GM12878 (cell line): ENCODE measurements at regions of chr17 and their contacts with region 1.

Region 1: GRCh38 chr17:27892866-27893769 is at the start of gene LYRM9:
- DNase-seq: peak; percentile 48
- ATAC-seq: peak; percentile 99
- H3K4me3 ChIP-seq: peak within 1 kb of the TSS; percentile 65
- H3K27ac ChIP-seq: peak within 1 kb of the TSS; percentile 61
- H3K4me1 ChIP-seq: peaks cover 8% of the 10 kb centered on the region
- H3K27me3 ChIP-seq: no peaks in the 10 kb centered on the region
- CTCF ChIP-seq: peak; percentile 77 to 91 (median 79)
- EP300 ChIP-seq: no peak
- POLR2A ChIP-seq: peak; percentile 72
- RAD21 ChIP-seq: peak; percentile 40
- polyA plus RNA-seq, gene LYRM9: 1.8 to 2.7 TPM

Region 2: GRCh38 chr17:27939474-27940465 is 46.7 kb after region 1 on chr17:
- CTCF ChIA-PET with region 1: interaction called, 17 read pairs
- POLR2A ChIA-PET with region 1: no interaction called
- RAD21 ChIA-PET with region 1: interaction called, 9 read pairs
- SMC1A ChIA-PET with region 1: interaction called, 21 read pairs
- in situ Hi-C with region 1: no loop called
- intact Hi-C with region 1: no loop called
- DNase-seq: no peak
- ATAC-seq: peak; percentile 93
- H3K4me3 ChIP-seq: no peak overlapping the region
- H3K27ac ChIP-seq: no peak overlapping the region
- H3K4me1 ChIP-seq: peaks cover 13% of the 10 kb centered on the region
- H3K27me3 ChIP-seq: no peaks in the 10 kb centered on the region
- CTCF ChIP-seq: no peak
- EP300 ChIP-seq: no peak; a peak in 1 of 4 replicates
- POLR2A ChIP-seq: no peak
- RAD21 ChIP-seq: no peak

Region 3: GRCh38 chr17:27975146-27976011 is 82.3 kb after region 1 on chr17:
- CTCF ChIA-PET with region 1: interaction called, 25 read pairs
- POLR2A ChIA-PET with region 1: interaction called, 3 read pairs
- RAD21 ChIA-PET with region 1: interaction called, 6 read pairs
- SMC1A ChIA-PET with region 1: interaction called, 20 read pairs
- in situ Hi-C with region 1: no loop called
- intact Hi-C with region 1: no loop called
- DNase-seq: no peak
- ATAC-seq: peak; percentile 75
- H3K4me3 ChIP-seq: no peak overlapping the region
- H3K27ac ChIP-seq: no peak overlapping the region
- H3K4me1 ChIP-seq: peaks cover 23% of the 10 kb centered on the region
- H3K27me3 ChIP-seq: no peaks in the 10 kb centered on the region
- CTCF ChIP-seq: no peak
- EP300 ChIP-seq: no peak
- POLR2A ChIP-seq: no peak
- RAD21 ChIP-seq: no peak

Region 4: GRCh38 chr17:27985306-27985705 is 92.2 kb after region 1 on chr17:
- CTCF ChIA-PET with region 1: interaction called, 5 read pairs
- POLR2A ChIA-PET with region 1: no interaction called
- RAD21 ChIA-PET with region 1: interaction called, 5 read pairs
- SMC1A ChIA-PET with region 1: interaction called, 10 read pairs
- in situ Hi-C with region 1: no loop called
- intact Hi-C with region 1: no loop called
- DNase-seq: no peak
- ATAC-seq: peak; percentile 67
- H3K4me3 ChIP-seq: no peak overlapping the region
- H3K27ac ChIP-seq: no peak overlapping the region; the same call in 1 of the 2 replicates
- H3K4me1 ChIP-seq: peaks cover 14% of the 10 kb centered on the region
- H3K27me3 ChIP-seq: no peaks in the 10 kb centered on the region; a peak in 1 of 4 replicates
- CTCF ChIP-seq: no peak
- EP300 ChIP-seq: no peak
- POLR2A ChIP-seq: no peak
- RAD21 ChIP-seq: no peak

Region 5: DNA sequence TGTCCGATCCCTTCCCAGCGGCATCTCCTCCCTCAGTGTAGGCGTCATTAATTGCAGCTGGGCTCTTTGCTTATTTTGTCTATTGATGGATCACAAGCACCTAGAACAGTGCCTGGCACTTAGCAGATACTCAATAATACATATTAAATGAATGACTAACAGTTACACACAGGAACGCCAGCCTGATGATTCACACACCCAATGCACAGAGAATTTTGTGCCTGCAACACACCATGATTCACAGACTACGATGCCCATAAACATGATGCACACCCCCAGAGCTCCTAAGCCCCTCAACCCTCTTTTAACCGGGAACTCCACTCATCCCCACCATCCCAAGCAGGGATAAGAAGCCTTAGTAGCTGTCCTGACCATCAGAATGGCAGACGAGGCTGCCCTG is 359.3 kb after region 1 on chr17:
- CTCF ChIA-PET with region 1: interaction called, 10 read pairs
- POLR2A ChIA-PET with region 1: no interaction called
- RAD21 ChIA-PET with region 1: interaction called, 6 read pairs
- SMC1A ChIA-PET with region 1: interaction called, 4 read pairs
- in situ Hi-C with region 1: no loop called
- intact Hi-C with region 1: loop called (anchors 5 kb)
- DNase-seq: no peak
- ATAC-seq: no peak
- H3K4me3 ChIP-seq: no peak overlapping the region
- H3K27ac ChIP-seq: no peak overlapping the region
- H3K4me1 ChIP-seq: no peaks in the 10 kb centered on the region
- H3K27me3 ChIP-seq: no peaks in the 10 kb centered on the region
- CTCF ChIP-seq: no peak
- EP300 ChIP-seq: no peak
- POLR2A ChIP-seq: no peak
- RAD21 ChIP-seq: no peak